ENCODE measurements at regions of chr18 and their contacts with region 1.

Region 1: DNA sequence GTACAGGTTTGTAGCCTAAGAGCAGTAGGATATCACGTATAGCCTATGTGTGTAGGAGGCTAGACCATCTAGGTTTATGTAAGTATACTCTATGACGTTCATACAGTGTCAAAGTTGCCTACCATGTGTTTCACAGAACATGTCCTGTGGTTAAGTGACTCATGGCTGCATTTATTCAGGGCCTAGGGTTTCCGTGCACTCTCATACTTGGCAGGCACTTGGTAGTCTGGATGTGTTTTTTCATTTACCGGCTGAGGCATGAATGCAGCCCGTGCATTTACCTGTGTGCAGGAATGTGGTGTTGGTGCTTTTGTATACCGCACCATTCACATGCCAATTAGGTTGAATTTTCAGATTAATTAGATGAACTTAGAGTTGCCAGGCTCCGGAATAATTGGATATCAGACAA is 43.4 kb downstream of the MYL12B start:
- DNase-seq: peak; percentile 72
- ATAC-seq: peak; percentile 98
- H3K4me3 Mint-ChIP-seq: peak overlapping the region; percentile 20
- H3K27ac Mint-ChIP-seq: peak overlapping the region; percentile 89
- H3K4me1 Mint-ChIP-seq: peaks cover 20% of the 10 kb centered on the region
- H3K27me3 Mint-ChIP-seq: peaks cover 16% of the 10 kb centered on the region

Region 2: DNA sequence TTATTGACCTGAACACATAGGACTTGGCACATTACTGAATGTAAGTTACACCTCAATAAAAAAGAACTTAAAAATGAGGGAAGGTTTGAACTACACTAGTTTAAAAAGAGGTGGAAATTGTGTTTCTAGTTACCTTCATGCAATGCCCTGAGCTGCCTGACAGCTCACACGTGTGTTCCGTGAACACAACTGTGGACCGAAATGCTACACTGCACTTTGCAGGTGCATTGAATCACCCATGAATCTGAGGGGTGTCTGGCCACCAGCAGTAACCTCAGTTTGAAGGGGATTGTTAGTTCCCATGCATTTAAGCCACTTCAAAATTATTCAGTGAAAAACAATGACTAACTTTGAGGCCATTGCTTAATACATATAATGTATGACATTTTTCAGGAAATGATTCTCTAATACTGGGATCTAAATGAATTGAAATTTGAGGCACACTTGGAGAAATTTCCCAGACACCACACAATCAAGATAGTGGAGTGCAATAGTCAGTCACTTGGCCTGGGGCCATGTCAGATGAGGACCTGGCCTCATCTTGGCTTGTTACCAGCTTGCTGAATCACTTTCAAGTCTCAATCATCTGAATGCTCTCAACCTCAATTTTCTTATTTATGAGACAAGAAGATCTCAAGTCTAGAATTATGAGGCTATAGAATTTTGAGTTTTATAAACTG is 15.9 kb after region 1 on chr18:
- CTCF ChIA-PET with region 1: interaction called, 4 read pairs
- POLR2A ChIA-PET with region 1: no interaction called
- intact Hi-C with region 1: loop called in 1 of 2 experiments (anchors 1 kb)
- DNase-seq: peak; percentile 54
- ATAC-seq: peak; percentile 38
- H3K4me3 Mint-ChIP-seq: no peak overlapping the region
- H3K27ac Mint-ChIP-seq: no peak overlapping the region
- H3K4me1 Mint-ChIP-seq: peaks cover 23% of the 10 kb centered on the region
- H3K27me3 Mint-ChIP-seq: peaks cover 9% of the 10 kb centered on the region

Region 3: DNA sequence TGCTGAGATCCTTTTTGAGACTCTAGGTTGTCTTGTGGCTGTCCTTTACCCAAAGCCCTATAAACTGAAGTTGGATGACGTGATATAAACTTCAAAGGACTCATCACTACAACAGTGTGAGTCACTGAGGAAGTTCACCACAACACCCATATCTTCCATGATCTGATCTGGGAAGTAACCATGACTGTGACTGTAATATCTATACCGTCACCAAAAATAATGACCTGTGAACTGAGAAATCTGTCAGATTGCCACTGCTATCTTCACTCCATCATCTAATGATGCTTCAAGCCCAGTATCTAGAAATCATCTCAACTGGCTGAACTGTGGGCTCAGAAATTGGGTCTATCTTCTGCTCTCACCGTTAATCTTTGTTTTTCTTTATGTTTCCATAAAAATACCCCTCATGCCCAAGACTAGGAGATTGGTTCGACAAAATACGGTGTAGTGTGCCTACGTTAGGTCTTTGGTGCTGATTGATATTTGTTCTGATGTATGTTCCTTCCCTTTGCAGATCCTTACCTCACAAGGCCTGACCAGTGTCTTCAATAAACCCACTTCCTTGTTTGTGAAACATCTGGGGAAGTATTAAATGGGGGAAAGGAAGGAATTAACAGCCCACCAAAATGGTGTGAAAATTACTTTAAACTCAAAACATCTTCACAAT is 34.8 kb after region 1 on chr18:
- CTCF ChIA-PET with region 1: no interaction called
- POLR2A ChIA-PET with region 1: no interaction called
- intact Hi-C with region 1: loop called in 1 of 2 experiments (anchors 2 kb)
- DNase-seq: no peak
- ATAC-seq: peak; percentile 92
- H3K4me3 Mint-ChIP-seq: no peak overlapping the region
- H3K27ac Mint-ChIP-seq: peak overlapping the region; percentile 73
- H3K4me1 Mint-ChIP-seq: peaks cover 21% of the 10 kb centered on the region
- H3K27me3 Mint-ChIP-seq: no peaks in the 10 kb centered on the region